IMR-90 (cell line): ENCODE measurements at regions of chr9 and their contacts with region 1.

Region 1: DNA sequence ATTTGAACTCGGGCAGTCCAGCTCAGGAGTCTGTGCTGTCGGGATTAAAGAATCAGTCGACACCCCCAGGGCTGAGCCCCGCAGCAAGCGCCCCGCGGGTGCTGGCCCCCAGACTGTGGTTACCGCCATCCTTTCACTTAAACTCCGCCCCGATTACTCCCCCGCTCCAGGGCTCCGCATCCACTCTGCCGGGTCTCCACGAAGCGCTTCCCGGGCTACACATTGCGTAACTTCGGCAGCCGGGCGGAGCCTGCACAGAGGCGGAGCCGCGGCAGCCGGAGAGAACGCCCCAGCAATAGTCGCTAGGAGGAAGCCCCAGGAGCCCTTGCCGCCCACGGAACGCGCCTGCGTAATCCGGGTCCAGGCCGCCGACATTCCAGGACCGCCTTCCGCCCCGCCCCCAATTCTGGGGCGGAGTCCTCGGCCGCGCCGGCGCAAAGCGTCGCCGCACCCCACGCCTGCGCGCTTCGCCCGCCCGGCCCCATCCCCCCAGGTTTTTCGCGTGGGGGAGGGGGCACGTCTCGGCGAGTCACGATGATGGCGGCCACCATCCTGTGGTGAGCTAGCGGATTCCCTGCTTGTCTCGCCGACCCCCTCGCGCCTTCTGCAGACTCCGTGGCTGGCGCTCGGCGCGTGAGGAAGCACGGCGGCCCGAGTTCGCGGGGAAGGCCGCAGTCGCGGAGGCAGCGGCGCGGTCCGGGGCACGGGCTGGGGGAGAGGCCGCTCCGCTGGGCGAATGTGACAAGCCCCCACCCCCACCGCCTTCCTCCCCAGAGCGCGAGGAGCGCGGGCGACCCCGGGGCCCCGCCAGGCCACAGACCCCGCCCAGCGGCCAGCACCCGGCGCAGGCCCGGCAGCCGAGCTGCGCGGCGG is at the start of gene RAD23B:
- DNase-seq: peak; percentile 98
- ATAC-seq: peak; percentile 89
- H3K4me3 ChIP-seq: peak within 1 kb of the TSS; percentile 79
- H3K27ac ChIP-seq: peak within 1 kb of the TSS; percentile 96
- H3K4me1 ChIP-seq: no peaks in the 10 kb centered on the region
- H3K27me3 ChIP-seq: no peaks in the 10 kb centered on the region
- CTCF ChIP-seq: no peak
- POLR2A ChIP-seq: peak; percentile 93
- RAD21 ChIP-seq: no peak
- total RNA-seq, gene RAD23B: 126 and 127 TPM in 2 replicates

Region 2: GRCh38 chr9:106830527-106831150 is 452.4 kb before region 1 on chr9:
- CTCF ChIA-PET with region 1: no interaction called
- POLR2A ChIA-PET with region 1: no interaction called
- dilution Hi-C with region 1: no loop called
- in situ Hi-C with region 1: no loop called
- intact Hi-C with region 1: no loop called
- DNase-seq: no peak
- ATAC-seq: no peak
- H3K4me3 ChIP-seq: no peak overlapping the region
- H3K27ac ChIP-seq: no peak overlapping the region
- H3K4me1 ChIP-seq: no peaks in the 10 kb centered on the region
- H3K27me3 ChIP-seq: no peaks in the 10 kb centered on the region; the same call in 1 of the 2 replicates
- CTCF ChIP-seq: no peak
- POLR2A ChIP-seq: no peak
- RAD21 ChIP-seq: no peak

Region 3: DNA sequence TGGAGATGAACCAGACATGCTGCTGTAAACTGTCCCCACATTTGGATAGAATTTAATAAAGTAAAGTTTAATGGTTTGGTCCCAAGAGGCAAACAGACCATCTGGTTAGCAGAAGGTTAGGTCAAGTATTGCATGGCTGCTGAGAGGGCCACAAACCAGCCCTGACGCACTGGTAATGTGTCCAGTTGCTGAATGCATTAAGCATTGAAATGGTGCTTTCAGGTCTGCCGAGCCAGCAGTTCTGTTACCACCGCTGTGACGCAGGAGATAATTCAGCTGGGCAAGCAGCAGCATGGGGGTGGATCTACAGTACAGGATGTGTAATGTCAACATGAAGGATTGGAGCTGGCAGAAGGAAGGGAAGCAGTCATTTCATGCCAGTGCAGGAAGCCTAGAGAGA is 404.1 kb before region 1 on chr9:
- CTCF ChIA-PET with region 1: no interaction called
- POLR2A ChIA-PET with region 1: no interaction called
- dilution Hi-C with region 1: no loop called
- in situ Hi-C with region 1: loop called (anchors 25 kb)
- intact Hi-C with region 1: no loop called
- DNase-seq: peak; percentile 99
- ATAC-seq: peak; percentile 86
- H3K4me3 ChIP-seq: no peak overlapping the region
- H3K27ac ChIP-seq: peak overlapping the region; percentile 13; the same call in 1 of the 2 replicates
- H3K4me1 ChIP-seq: peaks cover 26% of the 10 kb centered on the region
- H3K27me3 ChIP-seq: no peaks in the 10 kb centered on the region
- CTCF ChIP-seq: no peak
- POLR2A ChIP-seq: no peak
- RAD21 ChIP-seq: no peak

Region 4: DNA sequence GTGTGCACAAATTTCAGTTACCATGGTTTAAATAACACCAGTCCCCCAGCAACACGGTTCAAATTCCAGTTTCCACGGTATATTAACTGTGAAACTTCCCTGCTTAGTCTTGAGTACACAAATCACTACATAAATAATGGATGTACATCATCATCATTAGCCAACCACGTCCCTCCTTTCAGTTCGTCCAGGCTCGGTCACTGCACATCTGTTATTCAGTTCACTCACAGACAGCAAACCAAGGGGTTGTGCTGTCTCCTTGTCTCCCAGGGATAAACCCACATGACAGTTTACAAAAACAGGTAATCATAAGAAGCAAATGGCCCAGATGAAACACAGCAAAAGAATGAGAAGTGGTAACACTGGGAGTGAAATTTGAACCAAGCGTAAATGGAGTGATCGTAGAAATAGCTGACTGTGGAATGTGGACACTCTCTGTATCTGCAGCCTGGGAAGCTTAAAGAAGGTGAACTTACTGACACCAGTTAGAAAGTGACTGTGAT is 60.9 kb before region 1 on chr9:
- CTCF ChIA-PET with region 1: interaction called, 5 read pairs
- POLR2A ChIA-PET with region 1: no interaction called
- dilution Hi-C with region 1: no loop called
- in situ Hi-C with region 1: no loop called
- intact Hi-C with region 1: loop called (anchors 2 kb)
- DNase-seq: peak; percentile 79
- ATAC-seq: peak; percentile 94
- H3K4me3 ChIP-seq: peak overlapping the region; percentile 64
- H3K27ac ChIP-seq: peak overlapping the region; percentile 14; the same call in 1 of the 2 replicates
- H3K4me1 ChIP-seq: peaks cover 4% of the 10 kb centered on the region; the same call in 1 of the 2 replicates
- H3K27me3 ChIP-seq: no peaks in the 10 kb centered on the region
- CTCF ChIP-seq: no peak
- POLR2A ChIP-seq: peak; percentile 32; the same call in 1 of the 2 replicates
- RAD21 ChIP-seq: no peak

Region 5: DNA sequence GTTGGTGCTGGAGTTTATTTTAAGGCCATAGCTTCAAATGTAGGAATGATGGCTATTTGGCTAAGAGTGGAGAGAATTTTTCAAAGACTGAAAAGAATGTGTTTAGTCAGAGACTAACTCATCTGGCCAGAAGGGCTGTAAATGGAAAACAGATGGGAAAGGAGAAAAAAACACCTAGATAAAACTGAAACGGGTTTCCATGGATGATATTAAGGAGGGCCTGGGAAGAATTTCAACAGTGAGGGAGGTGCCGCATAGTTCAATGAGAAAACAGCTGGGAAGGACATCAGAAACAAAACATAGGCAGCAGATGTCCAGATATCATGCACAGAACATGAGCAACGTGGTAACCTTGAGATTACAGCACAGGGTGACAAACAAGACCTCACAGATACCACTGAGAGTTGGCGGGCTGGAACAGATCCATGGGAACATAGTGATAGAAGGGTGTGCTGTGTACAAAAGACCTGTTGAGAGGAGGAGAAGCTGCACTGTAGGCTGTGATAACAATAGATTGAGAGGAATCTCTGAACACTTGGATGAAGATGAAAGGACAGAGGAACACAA is 31.1 kb before region 1 on chr9:
- CTCF ChIA-PET with region 1: interaction called, 3 read pairs
- POLR2A ChIA-PET with region 1: interaction called, 8 read pairs
- dilution Hi-C with region 1: no loop called
- in situ Hi-C with region 1: no loop called
- intact Hi-C with region 1: loop called (anchors 1 kb)
- DNase-seq: peak; percentile 95
- ATAC-seq: peak; percentile 73
- H3K4me3 ChIP-seq: no peak overlapping the region
- H3K27ac ChIP-seq: peak overlapping the region; percentile 57; the same call in 1 of the 2 replicates
- H3K4me1 ChIP-seq: peaks cover 20% of the 10 kb centered on the region
- H3K27me3 ChIP-seq: no peaks in the 10 kb centered on the region
- CTCF ChIP-seq: no peak
- POLR2A ChIP-seq: no peak
- RAD21 ChIP-seq: no peak

Region 6: DNA sequence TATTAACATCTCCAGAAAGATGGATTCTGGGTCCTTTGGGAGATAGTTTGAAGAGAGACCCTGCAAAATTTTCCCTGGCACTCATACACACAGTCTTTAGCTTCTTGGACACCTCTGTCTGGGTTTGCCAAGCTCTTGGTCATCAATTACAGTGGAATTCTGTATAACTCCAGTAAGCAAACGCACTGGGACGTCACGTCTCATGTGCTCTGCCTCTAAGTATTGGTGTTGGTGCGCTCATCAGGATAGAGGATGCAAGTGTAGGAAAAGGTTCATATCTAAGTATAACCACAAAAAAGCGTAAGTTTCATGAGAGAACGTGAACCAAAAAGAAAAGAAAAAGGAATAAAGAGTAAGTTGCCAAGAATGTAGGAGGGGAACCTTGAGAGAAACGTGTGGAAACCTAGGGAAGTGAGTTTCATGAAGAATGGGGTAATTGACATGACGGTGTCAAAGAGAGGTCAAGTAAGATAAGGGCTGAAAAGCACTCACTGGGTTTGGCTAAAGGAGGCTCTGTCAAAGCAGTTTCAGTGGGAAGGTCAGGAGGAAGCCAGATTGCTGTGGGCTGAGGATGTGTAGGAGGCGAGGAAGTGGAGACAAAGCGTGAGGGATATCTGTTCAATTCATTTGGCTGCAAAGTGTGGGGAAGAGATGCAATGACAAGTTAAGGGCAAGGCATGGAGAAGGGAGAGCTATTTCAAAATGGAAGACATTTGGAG is 92.8 kb after region 1 on chr9:
- CTCF ChIA-PET with region 1: no interaction called
- POLR2A ChIA-PET with region 1: no interaction called
- dilution Hi-C with region 1: no loop called
- in situ Hi-C with region 1: no loop called
- intact Hi-C with region 1: no loop called
- DNase-seq: no peak
- ATAC-seq: no peak
- H3K4me3 ChIP-seq: no peak overlapping the region
- H3K27ac ChIP-seq: no peak overlapping the region
- H3K4me1 ChIP-seq: no peaks in the 10 kb centered on the region
- H3K27me3 ChIP-seq: peaks cover 5% of the 10 kb centered on the region; the same call in 1 of the 2 replicates
- CTCF ChIP-seq: no peak
- POLR2A ChIP-seq: no peak
- RAD21 ChIP-seq: no peak